Right cardiac atrium (tissue), 5 donors: ENCODE measurements at regions of chr19 and their contacts with region 1.

Region 1: GRCh38 chr19:10502524-10503001 is 593 bp downstream of the KEAP1 start:
- DNase-seq: peak; percentile 95 to 98 (median 98)
- ATAC-seq: peak; percentile 96 to 97
- H3K4me3 ChIP-seq: peak overlapping the region; percentile 90
- H3K27ac ChIP-seq: peak overlapping the region; percentile 95
- H3K4me1 ChIP-seq: no peaks in the 10 kb centered on the region
- H3K27me3 ChIP-seq: no peaks in the 10 kb centered on the region

Region 2: DNA sequence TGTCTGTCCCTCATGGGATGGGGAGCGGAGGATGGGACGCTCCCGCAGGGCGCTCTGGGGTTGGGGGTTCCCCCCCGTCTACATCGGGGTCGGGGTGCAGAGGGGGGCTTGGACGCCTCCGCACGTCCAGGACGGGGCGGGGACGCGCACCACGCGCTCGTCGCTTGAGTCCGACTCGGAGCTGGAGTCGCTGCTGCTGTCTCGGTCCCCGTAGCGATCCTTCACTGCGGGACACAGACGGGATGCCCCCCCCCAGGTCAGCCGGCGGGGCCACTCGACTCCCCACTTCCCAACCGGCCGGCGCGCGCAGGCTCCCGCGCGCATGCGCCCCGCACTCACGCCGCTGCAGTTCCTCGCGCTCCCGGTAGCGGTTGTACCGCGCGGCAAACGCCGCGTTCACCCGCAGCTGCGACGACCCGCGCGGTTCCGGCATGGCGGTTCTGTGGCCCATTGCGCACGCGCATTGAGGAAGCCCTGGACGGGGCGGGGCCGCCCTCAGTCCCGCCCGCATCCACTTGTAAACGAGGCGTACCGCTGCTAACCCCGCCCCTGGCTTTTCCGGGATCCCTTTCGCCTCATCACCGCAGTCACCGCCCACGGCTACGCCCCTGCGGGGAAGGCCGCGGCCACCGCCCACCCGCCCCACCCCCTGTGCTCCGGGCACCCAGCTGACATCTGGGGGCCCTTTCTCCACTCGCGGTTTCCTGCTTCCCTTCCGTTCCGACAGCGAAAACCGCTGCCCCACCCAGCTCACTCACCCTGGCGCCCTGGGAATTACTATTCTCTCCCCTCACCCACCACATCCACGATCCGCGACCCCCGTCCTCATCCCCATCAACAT is 63.2 kb after region 1 on chr19 and contains the start of gene KRI1:
- intact Hi-C with region 1: loop called in 2 of 4 experiments (anchors 10 kb)
- DNase-seq: peak; percentile 99 to 100 (median 100)
- ATAC-seq: peak; percentile 89
- H3K4me3 ChIP-seq: peak within 1 kb of the TSS; percentile 51
- H3K27ac ChIP-seq: peak within 1 kb of the TSS; percentile 72
- H3K4me1 ChIP-seq: no peaks in the 10 kb centered on the region
- H3K27me3 ChIP-seq: no peaks in the 10 kb centered on the region
- total RNA-seq, gene KRI1: 10.5 to 13.0 (median 12.1) TPM

Region 3: DNA sequence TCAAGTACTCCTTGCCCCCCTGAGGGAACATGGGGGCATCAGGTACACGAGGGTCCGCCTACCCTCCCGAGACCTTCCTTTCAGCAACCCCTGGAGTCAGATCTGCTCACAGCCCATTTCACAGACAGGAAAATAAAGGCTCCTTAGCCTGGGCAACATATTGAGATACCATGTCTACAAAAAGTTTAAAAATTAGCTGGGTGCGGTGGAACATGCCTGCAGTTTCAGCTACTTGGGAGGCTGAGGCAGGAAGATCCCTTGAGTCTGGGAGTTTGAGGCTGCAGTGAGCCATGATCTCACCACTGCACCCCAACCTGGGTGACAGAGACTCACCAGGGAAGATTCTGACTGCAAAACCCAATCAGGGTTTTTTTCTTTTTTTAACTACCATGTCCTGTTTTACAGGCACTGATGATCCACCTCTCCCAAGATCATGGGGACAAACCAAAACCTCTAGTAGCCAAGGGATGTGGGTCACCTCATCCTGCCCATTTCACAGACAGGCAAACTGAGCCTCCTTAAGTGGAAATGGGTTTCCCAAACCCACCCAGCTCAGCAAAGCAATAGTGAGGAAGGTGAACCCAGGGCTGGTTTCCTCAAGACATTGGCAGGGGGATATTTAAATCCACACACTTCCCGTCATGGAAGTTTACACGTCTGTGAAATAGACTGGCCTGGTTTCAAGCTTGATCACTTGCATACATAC is 72.6 kb after region 1 on chr19:
- intact Hi-C with region 1: loop called in 1 of 4 experiments (anchors 10 kb)
- DNase-seq: no peak
- ATAC-seq: no peak
- H3K4me3 ChIP-seq: no peak overlapping the region
- H3K27ac ChIP-seq: no peak overlapping the region
- H3K4me1 ChIP-seq: no peaks in the 10 kb centered on the region
- H3K27me3 ChIP-seq: no peaks in the 10 kb centered on the region